Calu3 (cell line): ENCODE measurements at regions of chr14 and their contacts with region 1.

Region 1: DNA sequence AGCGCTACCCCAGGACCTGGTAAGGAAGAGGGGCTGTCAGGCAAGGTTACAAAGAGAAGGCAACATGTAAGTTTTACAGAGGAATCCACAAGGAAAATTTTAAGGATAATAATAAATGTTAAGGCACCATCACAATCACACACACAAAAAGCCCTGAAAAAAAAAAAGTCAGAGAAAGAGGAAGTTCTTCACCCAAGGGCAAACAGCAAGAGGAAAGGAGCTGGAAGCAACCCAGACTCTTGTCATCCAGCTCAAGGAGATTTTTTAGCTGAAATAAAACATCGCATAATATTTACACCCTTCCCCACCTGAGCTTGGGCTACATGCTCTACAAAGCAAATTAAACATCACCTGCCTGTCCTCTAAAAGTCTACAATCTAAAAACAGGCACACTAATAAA is 9.5 kb downstream of the SPTB start:
- DNase-seq: no peak
- H3K4me3 Mint-ChIP-seq: no peak overlapping the region
- H3K27ac Mint-ChIP-seq: no peak overlapping the region
- H3K4me1 Mint-ChIP-seq: no peaks in the 10 kb centered on the region
- H3K27me3 Mint-ChIP-seq: peaks cover 96% of the 10 kb centered on the region
- CTCF ChIP-seq: no peak

Region 2: GRCh38 chr14:64444984-64445845 is 424.9 kb before region 1 on chr14:
- CTCF ChIA-PET with region 1: interaction called, 10 read pairs
- intact Hi-C with region 1: no loop called
- DNase-seq: no peak
- H3K4me3 Mint-ChIP-seq: no peak overlapping the region
- H3K27ac Mint-ChIP-seq: peak overlapping the region; percentile 53
- H3K4me1 Mint-ChIP-seq: peaks cover 18% of the 10 kb centered on the region
- H3K27me3 Mint-ChIP-seq: no peaks in the 10 kb centered on the region
- CTCF ChIP-seq: no peak

Region 3: GRCh38 chr14:64698903-64699302 is 171.3 kb before region 1 on chr14:
- CTCF ChIA-PET with region 1: no interaction called
- intact Hi-C with region 1: no loop called
- DNase-seq: peak; percentile 57
- H3K4me3 Mint-ChIP-seq: no peak overlapping the region
- H3K27ac Mint-ChIP-seq: peak overlapping the region; percentile 42
- H3K4me1 Mint-ChIP-seq: peaks cover 17% of the 10 kb centered on the region
- H3K27me3 Mint-ChIP-seq: peaks cover 38% of the 10 kb centered on the region
- CTCF ChIP-seq: no peak